ENCODE measurements at regions of chr11 and their contacts with region 1.

Region 1: DNA sequence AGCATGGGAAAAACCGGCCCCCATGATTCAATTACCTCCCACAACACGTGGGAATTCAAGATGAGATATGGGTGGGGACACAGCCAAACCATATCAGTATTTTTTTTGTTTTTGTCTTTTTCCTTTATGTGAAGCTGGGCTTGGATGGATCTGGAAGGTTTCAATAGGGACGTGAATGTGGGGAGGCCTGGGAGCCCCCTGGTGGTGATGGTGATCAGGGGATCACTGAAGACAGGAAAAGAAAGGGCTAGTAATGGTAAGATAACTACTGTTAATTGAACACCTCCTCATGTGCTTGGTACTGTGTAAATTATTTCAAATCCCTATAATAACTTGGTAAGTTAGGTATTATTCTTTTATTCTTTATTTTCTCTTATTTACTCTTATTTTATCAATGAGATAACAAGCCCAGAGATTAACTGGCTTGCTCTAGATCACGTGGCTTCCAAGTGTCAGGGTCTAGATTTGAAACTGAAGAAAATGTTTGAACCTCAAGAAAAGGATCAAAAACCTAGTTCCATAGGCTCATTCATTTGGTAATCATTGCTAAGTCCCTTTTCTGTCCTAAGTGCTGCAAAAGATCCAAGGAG is 364.2 kb downstream of the TENM4 start:
- DNase-seq: peak; percentile 50 to 57
- H3K4me3 ChIP-seq: no peak overlapping the region
- H3K27ac ChIP-seq: no peak overlapping the region
- H3K4me1 ChIP-seq: peaks cover 0 to 8% (median 0%) of the 10 kb centered on the region in 4 donors
- H3K27me3 ChIP-seq: no peaks in the 10 kb centered on the region
- CTCF ChIP-seq: peak in 5 of 7 experiments; percentile 24 to 61 (median 41)
- EP300 ChIP-seq: no peak
- POLR2A ChIP-seq: no peak

Region 2: DNA sequence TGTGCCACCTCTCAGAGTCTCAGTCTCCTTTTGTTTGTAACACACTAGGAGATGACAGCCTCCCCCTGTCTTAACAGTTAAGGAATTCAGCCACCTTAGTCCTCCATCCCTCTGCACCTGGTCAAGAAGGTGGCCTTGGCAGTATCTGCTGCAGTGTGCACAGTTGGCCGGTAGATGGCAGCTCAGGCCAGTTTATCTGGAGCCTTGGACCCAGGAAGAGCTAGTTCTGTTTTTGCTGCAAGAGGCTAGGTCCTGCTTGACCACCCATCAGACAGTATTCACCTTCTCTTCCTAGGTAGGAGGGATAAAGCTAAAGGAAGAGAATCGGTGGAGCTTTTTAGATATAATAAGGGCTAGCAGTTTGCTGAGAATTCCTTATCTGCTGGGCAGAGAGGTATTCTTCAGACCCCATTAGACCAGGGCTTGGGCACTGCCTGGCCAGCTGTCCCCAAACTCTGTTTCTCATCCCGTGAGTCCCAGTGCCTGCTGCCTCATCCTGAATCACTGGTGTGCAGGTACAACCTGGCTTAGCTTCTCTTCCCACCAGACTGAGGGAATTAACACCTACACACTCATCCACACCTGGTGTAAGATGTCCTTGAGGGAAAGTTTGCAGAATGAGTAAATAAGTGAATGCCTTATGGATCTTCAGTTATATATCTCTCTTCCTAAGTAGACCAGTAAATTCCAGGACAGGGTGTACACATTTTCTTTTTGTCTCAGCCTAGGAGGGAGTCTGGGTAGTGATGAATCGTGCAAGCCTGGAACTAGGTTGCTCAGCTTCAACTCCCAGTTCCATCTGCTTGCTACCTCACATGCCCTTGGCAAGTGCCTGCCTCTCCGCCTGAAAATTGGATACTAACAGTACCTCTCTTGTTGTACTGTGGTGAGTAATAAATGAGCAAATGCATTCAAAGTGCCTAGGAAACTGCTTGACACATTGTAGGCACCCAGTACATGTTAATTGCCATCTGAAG is 431.1 kb before region 1 on chr11:
- intact Hi-C with region 1: loop called (anchors 10 kb)
- DNase-seq: peak; percentile 79 to 88
- H3K4me3 ChIP-seq: no peak overlapping the region
- H3K27ac ChIP-seq: no peak overlapping the region
- H3K4me1 ChIP-seq: peaks cover 0 to 4% (median 0%) of the 10 kb centered on the region in 4 donors
- H3K27me3 ChIP-seq: peaks cover 0 to 6% (median 0%) of the 10 kb centered on the region in 3 donors
- CTCF ChIP-seq: peak in 5 of 7 experiments; percentile 76 to 94 (median 91)
- EP300 ChIP-seq: no peak
- POLR2A ChIP-seq: no peak

Measured in stomach (tissue), 19 donors.